Activated naive CD4-positive, alpha-beta T cell treated with anti-CD3 and anti-CD28 coated beads for 36 hours (primary cell): ENCODE measurements at regions of chr18 and their contacts with region 1.

Region 1: GRCh38 chr18:961644-962355 is 57.1 kb downstream of the ADCYAP1 start:
- DNase-seq: peak; percentile 67
- H3K4me3 Mint-ChIP-seq: peak overlapping the region; percentile 1
- H3K27ac Mint-ChIP-seq: no peak overlapping the region
- H3K4me1 Mint-ChIP-seq: peaks cover 4% of the 10 kb centered on the region
- H3K27me3 Mint-ChIP-seq: peaks cover 11% of the 10 kb centered on the region

Region 2: DNA sequence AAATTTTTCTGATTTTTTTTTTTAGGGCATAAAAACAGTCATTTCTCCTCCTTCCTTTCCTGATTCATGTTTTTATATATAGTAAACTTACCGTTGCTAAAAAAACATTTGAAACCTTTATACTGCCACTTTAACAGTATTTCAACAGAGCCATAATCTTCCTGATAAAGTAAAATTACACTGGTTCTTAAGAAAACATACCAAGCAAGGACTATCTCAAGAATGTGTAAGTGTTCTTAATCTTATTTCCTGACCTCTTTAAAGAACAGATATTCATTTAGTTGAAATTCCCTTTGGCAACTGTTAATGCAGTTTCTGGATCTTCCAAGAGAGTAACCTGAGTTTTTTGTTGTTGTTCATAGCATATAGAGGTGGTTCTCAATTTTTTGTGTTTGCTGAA is 434.7 kb before region 1 on chr18:
- CTCF ChIA-PET with region 1: no interaction called
- intact Hi-C with region 1: no loop called
- DNase-seq: no peak
- H3K4me3 Mint-ChIP-seq: no peak overlapping the region
- H3K27ac Mint-ChIP-seq: no peak overlapping the region
- H3K4me1 Mint-ChIP-seq: no peaks in the 10 kb centered on the region
- H3K27me3 Mint-ChIP-seq: peaks cover 18% of the 10 kb centered on the region

Region 3: DNA sequence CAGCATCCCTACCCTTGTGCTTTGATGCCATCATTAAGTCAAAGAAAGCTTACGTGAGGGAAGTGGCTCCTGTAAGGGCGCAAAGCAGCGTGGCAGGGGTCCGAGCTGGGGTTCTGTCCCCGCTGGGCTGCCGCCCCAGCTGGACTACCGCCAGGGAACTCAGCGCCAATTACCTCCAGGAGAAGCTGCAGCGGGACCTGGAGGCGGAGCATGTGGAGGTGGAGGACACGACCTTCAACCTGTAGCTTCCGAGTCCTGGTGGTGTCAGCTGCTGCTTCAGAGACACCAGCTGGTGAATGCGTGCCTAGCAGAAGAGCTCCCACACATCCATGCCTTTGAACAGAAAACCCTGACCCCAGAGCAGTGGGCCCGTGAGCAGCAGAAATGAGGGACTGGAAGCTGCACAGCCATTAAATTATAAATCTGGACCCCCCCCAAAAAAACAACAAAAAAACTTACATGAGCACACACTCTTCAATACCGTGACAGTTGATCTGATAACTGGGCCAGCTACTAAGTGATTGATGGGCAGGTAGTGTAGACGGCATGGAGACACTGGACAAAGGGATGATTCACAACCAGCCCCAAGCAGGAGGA is 129.6 kb before region 1 on chr18:
- CTCF ChIA-PET with region 1: no interaction called
- intact Hi-C with region 1: no loop called
- DNase-seq: peak; percentile 42
- H3K4me3 Mint-ChIP-seq: no peak overlapping the region
- H3K27ac Mint-ChIP-seq: no peak overlapping the region
- H3K4me1 Mint-ChIP-seq: peaks cover 15% of the 10 kb centered on the region
- H3K27me3 Mint-ChIP-seq: no peaks in the 10 kb centered on the region

Region 4: GRCh38 chr18:864872-865273 is 96.9 kb before region 1 on chr18:
- CTCF ChIA-PET with region 1: interaction called, 6 read pairs
- intact Hi-C with region 1: loop called (anchors 1 kb)
- DNase-seq: peak; percentile 79
- H3K4me3 Mint-ChIP-seq: no peak overlapping the region
- H3K27ac Mint-ChIP-seq: no peak overlapping the region
- H3K4me1 Mint-ChIP-seq: peaks cover 2% of the 10 kb centered on the region
- H3K27me3 Mint-ChIP-seq: peaks cover 9% of the 10 kb centered on the region

Region 5: GRCh38 chr18:907115-907884 is 54.5 kb before region 1 on chr18:
- CTCF ChIA-PET with region 1: interaction called, 3 read pairs
- intact Hi-C with region 1: loop called (anchors 5 kb)
- DNase-seq: peak; percentile 10
- H3K4me3 Mint-ChIP-seq: peak overlapping the region; percentile 54
- H3K27ac Mint-ChIP-seq: no peak overlapping the region
- H3K4me1 Mint-ChIP-seq: peaks cover 30% of the 10 kb centered on the region
- H3K27me3 Mint-ChIP-seq: peaks cover 72% of the 10 kb centered on the region

Region 6: GRCh38 chr18:944440-944839 is 17.4 kb before region 1 on chr18:
- CTCF ChIA-PET with region 1: interaction called, 12 read pairs
- intact Hi-C with region 1: no loop called
- DNase-seq: no peak
- H3K4me3 Mint-ChIP-seq: no peak overlapping the region
- H3K27ac Mint-ChIP-seq: no peak overlapping the region
- H3K4me1 Mint-ChIP-seq: no peaks in the 10 kb centered on the region
- H3K27me3 Mint-ChIP-seq: peaks cover 9% of the 10 kb centered on the region

Region 7: DNA sequence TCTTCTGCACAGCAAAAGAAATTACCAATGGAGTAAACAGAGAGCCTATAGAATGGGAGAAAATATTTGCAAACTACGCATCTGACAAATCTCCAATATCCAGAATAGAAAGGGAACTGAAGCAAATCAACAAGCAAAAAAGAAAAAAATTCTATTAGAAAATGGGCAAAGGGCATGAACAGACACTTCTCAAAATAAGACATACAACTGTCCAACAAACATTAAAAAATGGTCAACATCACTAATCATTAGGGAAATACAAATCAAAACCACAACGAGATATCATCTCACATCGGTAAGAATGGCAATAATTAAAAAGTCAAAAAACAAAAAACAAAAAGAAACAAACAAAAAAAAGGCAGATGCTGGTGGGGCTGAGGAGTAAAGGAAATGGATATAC is 299.3 kb after region 1 on chr18:
- CTCF ChIA-PET with region 1: no interaction called
- intact Hi-C with region 1: no loop called
- DNase-seq: no peak
- H3K4me3 Mint-ChIP-seq: no peak overlapping the region
- H3K27ac Mint-ChIP-seq: no peak overlapping the region
- H3K4me1 Mint-ChIP-seq: no peaks in the 10 kb centered on the region
- H3K27me3 Mint-ChIP-seq: no peaks in the 10 kb centered on the region

Region 8: GRCh38 chr18:2070619-2071018 is 1108.8 kb after region 1 on chr18:
- CTCF ChIA-PET with region 1: no interaction called
- intact Hi-C with region 1: no loop called
- DNase-seq: no peak
- H3K4me3 Mint-ChIP-seq: no peak overlapping the region
- H3K27ac Mint-ChIP-seq: no peak overlapping the region
- H3K4me1 Mint-ChIP-seq: no peaks in the 10 kb centered on the region
- H3K27me3 Mint-ChIP-seq: no peaks in the 10 kb centered on the region